Activated CD4-positive, alpha-beta memory T cell treated with anti-CD3 and anti-CD28 coated beads for 36 hours (primary cell): ENCODE measurements at regions of chr3 and their contacts with region 1.

Region 1: DNA sequence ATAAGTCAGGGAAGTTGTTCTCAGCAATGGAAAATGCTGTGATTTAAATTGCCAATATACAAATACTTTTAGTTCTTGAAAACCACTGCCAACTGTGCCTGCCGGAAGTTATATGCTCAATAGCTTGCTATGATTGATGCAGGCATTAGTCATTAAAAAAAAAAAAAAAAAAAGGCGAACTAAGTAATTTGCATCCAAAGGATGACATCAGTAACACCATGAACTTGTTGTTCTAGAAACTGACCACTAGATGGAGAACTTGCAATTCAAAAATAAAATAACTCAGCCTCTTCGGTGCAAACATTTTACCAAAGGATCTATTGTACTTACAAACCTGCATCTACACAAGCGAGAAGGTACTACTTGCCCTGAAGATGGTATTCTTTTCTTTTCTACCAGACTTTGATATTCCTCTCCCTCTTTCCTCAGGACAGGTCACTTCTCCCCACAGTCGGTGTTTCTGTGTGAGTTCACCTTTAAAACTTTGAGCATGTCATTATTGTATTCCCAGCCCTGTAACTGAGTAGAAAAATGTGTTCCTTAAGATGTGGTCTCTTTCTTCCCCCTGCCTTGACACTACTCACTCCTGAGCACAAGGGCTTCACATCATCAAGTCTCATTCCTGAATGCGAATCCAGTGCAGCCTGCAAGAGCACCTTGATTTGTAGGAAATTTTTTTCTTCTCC is 115.0 kb upstream of the VEPH1 start:
- DNase-seq: no peak
- H3K4me3 Mint-ChIP-seq: no peak overlapping the region
- H3K27ac Mint-ChIP-seq: no peak overlapping the region
- H3K4me1 Mint-ChIP-seq: peaks cover 4% of the 10 kb centered on the region
- H3K27me3 Mint-ChIP-seq: peaks cover 4% of the 10 kb centered on the region

Region 2: GRCh38 chr3:158109804-158110657 is 491.8 kb after region 1 on chr3 and contains the start of gene RSRC1:
- CTCF ChIA-PET with region 1: no interaction called
- POLR2A ChIA-PET with region 1: no interaction called
- intact Hi-C with region 1: loop called (anchors 5 kb)
- DNase-seq: peak; percentile 85
- H3K4me3 Mint-ChIP-seq: peak within 1 kb of the TSS; percentile 99
- H3K27ac Mint-ChIP-seq: peak within 1 kb of the TSS; percentile 77
- H3K4me1 Mint-ChIP-seq: peaks cover 54% of the 10 kb centered on the region
- H3K27me3 Mint-ChIP-seq: peaks cover 36% of the 10 kb centered on the region
- total RNA-seq, gene RSRC1: 39.4 to 43.8 TPM

Region 3: DNA sequence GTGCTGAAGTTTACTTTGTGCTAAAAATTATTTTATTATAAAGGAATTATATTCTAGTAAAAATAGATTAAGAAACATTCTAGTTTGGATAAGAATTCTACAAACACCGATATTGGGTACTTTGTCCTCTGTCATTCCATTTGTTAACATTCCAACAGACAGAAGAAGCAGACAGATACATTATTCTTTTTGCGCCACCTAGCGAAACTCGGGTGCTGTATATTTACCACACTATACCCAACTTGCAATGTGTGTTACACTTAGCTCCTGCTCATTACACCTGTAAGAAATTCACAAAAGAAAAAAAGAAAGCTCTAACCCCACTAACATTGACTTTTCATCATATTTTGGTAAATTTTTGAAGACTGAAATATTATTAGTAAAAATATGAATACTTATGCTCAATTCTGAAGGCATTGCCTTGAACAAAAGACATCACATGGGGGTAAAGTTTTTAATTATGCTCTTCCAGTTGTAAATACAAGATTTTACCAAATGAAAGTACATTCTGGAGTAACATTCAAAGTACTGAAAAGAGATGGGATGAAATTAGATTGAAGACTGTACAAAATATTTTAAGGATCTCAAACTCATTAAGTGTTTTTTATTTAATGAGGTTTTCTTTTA is 816.3 kb after region 1 on chr3:
- CTCF ChIA-PET with region 1: interaction called, 6 read pairs
- POLR2A ChIA-PET with region 1: no interaction called
- intact Hi-C with region 1: loop called (anchors 2 kb)
- DNase-seq: peak; percentile 16
- H3K4me3 Mint-ChIP-seq: no peak overlapping the region
- H3K27ac Mint-ChIP-seq: no peak overlapping the region
- H3K4me1 Mint-ChIP-seq: no peaks in the 10 kb centered on the region
- H3K27me3 Mint-ChIP-seq: no peaks in the 10 kb centered on the region

Region 4: DNA sequence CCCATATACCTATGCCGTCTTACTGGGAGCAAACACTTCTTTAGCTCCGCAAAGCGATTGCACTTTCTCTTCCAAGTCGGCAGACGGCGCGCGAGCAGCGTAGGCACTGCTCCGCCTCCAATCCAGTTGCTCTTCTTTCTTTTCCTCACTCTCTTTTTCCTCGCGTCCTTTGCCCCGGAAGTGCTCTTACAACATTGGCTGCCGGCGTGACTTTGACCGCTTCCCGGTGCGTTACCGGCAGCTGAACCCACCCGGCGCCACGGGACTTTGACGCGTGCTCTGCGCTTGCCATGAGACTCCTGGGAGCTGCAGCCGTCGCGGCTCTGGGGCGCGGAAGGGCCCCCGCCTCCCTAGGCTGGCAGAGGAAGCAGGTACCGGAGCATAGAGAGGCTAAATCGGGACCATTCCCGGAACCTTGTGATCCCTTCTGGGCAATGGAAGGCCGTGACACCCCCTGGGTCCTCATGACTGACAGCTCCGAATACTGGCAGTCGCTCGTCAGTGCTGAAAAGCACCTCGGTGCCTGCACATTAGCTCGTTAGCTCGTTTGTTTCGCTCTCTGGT is 1026.2 kb after region 1 on chr3 and contains the start of gene GFM1:
- CTCF ChIA-PET with region 1: no interaction called
- POLR2A ChIA-PET with region 1: no interaction called
- intact Hi-C with region 1: loop called (anchors 10 kb)
- DNase-seq: peak; percentile 93
- H3K4me3 Mint-ChIP-seq: peak within 1 kb of the TSS; percentile 89
- H3K27ac Mint-ChIP-seq: peak within 1 kb of the TSS; percentile 86
- H3K4me1 Mint-ChIP-seq: peaks cover 38% of the 10 kb centered on the region
- H3K27me3 Mint-ChIP-seq: no peaks in the 10 kb centered on the region
- total RNA-seq, gene GFM1: 48.7 to 57.3 TPM